Aorta (tissue), 5 donors: ENCODE measurements at regions of chr1 and their contacts with region 1.

Region 1: DNA sequence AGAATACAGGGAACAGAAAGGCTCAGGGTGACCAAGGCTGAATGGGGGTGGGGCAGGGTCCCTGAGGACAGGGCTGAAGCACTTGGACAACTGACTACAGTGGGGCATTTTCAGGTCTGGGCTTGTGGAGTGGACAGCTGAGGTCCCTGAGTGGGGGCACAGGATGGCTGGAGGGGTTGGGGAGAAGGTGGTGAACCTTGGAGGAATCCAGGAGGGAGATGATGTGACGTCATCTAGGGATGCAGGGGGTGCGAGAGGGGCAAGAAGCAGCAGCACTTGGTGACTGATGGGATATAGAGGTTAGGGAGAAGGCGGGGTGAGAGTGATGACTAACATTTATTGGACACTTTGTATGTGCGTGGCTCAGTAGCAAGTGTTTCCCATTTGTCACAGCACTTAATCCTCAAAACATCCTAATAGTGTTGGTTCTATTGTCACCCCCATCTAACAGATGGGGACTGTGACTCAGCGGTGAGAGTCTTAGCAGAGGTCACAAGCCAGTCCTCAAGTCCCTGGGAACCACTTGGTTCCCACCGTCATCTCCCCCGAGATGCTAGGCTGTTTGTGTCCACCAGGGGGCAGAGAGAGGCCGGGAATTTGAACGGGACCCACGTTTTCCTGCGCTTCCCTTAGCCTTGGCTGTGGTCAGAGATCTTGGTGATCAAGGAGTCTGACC is 27.9 kb upstream of the BMP8B start:
- DNase-seq: peak in 1 of 2 donors; percentile 89
- ATAC-seq: peak; percentile 89
- H3K4me3 ChIP-seq: no peak overlapping the region
- H3K27ac ChIP-seq: no peak overlapping the region
- H3K4me1 ChIP-seq: no peaks in the 10 kb centered on the region
- H3K27me3 ChIP-seq: no peaks in the 10 kb centered on the region

Region 2: DNA sequence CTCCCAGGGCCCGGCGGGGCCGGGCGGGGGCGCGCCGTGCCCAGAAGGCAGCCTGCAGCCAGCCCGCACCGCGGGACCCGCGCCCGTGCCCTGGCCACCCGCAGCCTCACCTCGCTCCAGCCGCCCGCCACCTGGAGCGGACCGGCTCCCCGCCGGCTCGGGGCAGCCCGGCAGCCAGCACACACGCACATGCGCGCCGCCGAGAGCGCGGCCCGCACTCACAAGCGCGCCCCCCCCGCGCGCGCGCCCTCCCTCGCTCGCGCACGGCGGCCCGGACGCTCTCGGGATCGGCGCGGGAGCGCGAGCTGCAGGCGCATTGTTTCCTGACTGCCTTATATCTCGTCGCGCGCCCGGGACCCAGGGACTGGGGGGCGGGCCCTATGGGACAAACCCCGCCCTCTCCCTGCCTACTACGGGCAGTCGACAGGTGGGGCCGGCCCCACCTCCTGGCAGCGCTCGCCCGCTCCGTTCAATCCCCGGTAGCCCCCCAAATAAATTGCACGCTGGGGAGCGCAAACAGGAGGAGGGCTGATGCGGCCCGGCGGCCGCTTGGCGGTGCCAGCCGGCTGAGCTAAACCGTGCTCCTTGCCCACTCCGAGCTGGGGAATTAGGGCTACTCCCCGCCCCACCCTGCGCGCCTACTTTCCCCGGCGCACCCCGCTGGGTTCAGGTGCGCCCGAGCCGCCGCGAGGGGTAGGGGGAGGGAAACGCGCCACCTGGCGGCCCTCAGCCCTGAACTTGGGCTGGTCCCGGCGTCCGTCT is 85.3 kb after region 1 on chr1 and contains the start of gene MYCL:
- intact Hi-C with region 1: loop called (anchors 5 kb)
- DNase-seq: peak; percentile 70 to 87
- ATAC-seq: peak; percentile 81
- H3K4me3 ChIP-seq: peak within 1 kb of the TSS; percentile 49 to 67
- H3K27ac ChIP-seq: no peak within 1 kb of the TSS
- H3K4me1 ChIP-seq: no peaks in the 10 kb centered on the region
- H3K27me3 ChIP-seq: no peaks in the 10 kb centered on the region
- total RNA-seq, gene MYCL: 0.45 to 1.2 TPM

Region 3: DNA sequence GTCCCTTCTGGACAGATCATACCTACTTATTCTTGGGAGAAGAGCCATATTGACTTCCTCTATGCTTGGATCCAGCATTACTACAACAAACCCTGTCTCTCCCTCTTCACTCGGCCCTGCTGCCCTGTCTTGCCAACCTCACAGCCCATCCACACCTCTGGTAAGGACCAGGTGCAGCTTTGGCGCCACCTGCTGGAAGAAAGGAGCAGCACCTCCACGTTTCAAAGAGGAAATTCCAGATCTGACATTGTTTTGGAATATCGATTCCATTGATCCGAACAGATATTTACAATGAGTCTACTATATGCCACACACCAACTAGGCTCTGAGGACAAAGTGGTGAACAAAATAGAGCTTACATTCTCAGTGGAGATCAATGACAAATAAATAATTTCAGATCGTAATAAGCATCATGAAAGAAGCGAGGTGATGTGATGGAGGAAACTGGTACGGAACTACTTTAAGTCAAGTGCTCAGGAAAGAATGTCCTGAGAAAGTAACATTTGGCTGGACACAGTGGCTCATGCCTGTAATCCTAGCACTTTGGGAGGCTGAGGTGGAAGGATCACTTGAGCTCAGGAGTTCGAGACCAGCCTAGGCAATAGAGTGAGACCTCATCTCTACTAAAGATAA is 157.1 kb after region 1 on chr1:
- intact Hi-C with region 1: loop called (anchors 1 to 2 kb)
- DNase-seq: peak; percentile 79 to 92
- ATAC-seq: peak; percentile 87
- H3K4me3 ChIP-seq: no peak overlapping the region
- H3K27ac ChIP-seq: no peak overlapping the region
- H3K4me1 ChIP-seq: no peaks in the 10 kb centered on the region
- H3K27me3 ChIP-seq: no peaks in the 10 kb centered on the region

Region 4: GRCh38 chr1:40032240-40032891 is 215.8 kb after region 1 on chr1:
- intact Hi-C with region 1: loop called in 1 of 2 experiments (anchors 2 kb)
- DNase-seq: peak; percentile 59 to 62
- ATAC-seq: peak; percentile 69
- H3K4me3 ChIP-seq: no peak overlapping the region
- H3K27ac ChIP-seq: no peak overlapping the region
- H3K4me1 ChIP-seq: no peaks in the 10 kb centered on the region
- H3K27me3 ChIP-seq: no peaks in the 10 kb centered on the region